ENCODE measurements at regions of chr3 and their contacts with region 1.

Region 1: GRCh38 chr3:28241221-28242160 is at the start of gene CMC1:
- DNase-seq: peak; percentile 96
- H3K4me3 Mint-ChIP-seq: peak within 1 kb of the TSS; percentile 93
- H3K27ac Mint-ChIP-seq: peak within 1 kb of the TSS; percentile 94
- H3K4me1 Mint-ChIP-seq: peaks cover 38% of the 10 kb centered on the region
- H3K27me3 Mint-ChIP-seq: no peaks in the 10 kb centered on the region
- total RNA-seq, gene CMC1: 27.5 to 28.6 TPM

Region 2: DNA sequence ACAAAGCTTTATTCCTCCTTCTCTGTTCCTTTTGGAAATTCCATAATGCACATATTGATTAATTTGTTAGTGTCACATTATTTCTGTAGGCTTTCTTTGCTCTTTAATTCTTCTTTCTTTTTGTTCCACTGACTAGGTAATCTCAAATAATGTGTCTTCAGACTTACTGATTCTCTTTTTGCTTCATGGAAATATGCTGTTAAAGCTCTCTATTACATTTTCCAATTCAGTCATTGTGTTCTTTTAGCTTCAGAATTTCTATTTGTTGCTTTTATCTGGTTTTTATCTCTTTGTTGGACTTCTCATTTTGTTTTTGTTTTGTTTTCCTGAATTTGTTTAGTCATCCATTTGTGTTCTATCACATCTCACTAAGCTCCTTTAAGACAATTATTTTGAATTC is 372.3 kb before region 1 on chr3:
- CTCF ChIA-PET with region 1: no interaction called
- POLR2A ChIA-PET with region 1: no interaction called
- intact Hi-C with region 1: no loop called
- DNase-seq: no peak
- H3K4me3 Mint-ChIP-seq: no peak overlapping the region
- H3K27ac Mint-ChIP-seq: no peak overlapping the region
- H3K4me1 Mint-ChIP-seq: no peaks in the 10 kb centered on the region
- H3K27me3 Mint-ChIP-seq: no peaks in the 10 kb centered on the region

Region 3: GRCh38 chr3:27960133-27960532 is 281.4 kb before region 1 on chr3:
- CTCF ChIA-PET with region 1: no interaction called
- POLR2A ChIA-PET with region 1: no interaction called
- intact Hi-C with region 1: no loop called
- DNase-seq: no peak
- H3K4me3 Mint-ChIP-seq: no peak overlapping the region
- H3K27ac Mint-ChIP-seq: no peak overlapping the region
- H3K4me1 Mint-ChIP-seq: peaks cover 31% of the 10 kb centered on the region
- H3K27me3 Mint-ChIP-seq: no peaks in the 10 kb centered on the region

Region 4: GRCh38 chr3:28171962-28172361 is 69.5 kb before region 1 on chr3:
- CTCF ChIA-PET with region 1: no interaction called
- POLR2A ChIA-PET with region 1: no interaction called
- intact Hi-C with region 1: loop called (anchors 1 kb)
- DNase-seq: no peak
- H3K4me3 Mint-ChIP-seq: peak overlapping the region; percentile 12
- H3K27ac Mint-ChIP-seq: peak overlapping the region; percentile 72
- H3K4me1 Mint-ChIP-seq: peaks cover 10% of the 10 kb centered on the region
- H3K27me3 Mint-ChIP-seq: peaks cover 2% of the 10 kb centered on the region

Region 5: DNA sequence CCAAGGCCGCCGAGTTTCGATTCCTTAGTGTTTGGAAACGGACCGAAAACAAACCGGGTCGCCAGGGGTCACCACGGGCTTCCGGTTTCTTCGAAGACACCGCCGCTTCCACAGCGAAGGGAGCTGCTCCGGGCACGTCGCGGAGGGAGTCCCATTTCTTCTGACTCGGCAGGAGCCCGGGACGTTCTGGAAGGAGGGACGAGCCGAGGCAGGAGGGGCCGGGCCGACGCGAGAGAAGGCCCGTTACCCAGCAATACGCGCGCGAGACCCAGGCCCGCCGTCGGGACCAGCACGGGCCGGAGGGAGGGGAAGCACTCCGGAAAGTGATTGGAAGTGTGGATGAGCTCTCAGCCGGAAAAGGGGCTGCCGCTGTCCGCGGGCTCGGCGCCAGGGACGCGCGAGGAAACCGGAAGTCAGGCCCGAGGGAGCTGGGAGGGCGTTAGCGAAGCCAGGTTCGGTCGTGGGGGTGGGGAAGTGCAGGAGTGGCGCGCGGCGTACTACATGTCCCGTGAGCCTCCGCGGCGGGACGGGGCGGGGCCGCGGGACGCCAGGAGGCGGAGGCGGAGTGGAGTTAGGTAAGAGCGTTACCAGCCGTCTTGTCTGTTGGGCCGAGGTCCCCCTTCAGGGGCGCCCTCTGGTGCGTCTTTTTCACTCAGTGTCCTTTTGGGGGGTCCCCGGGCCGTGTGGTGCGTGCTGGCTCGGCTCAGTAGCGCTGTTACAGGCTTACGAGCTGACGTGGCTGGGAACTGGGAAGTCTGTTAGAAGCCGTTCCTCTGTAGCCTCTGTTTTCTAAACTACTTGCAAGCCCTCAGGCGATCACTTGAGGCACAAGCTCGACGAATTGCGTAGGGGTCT is 107.4 kb after region 1 on chr3 and contains the starts of genes AZI2 and ZCWPW2:
- CTCF ChIA-PET with region 1: no interaction called
- POLR2A ChIA-PET with region 1: interaction called, 5 read pairs
- intact Hi-C with region 1: loop called (anchors 1 kb)
- DNase-seq: peak; percentile 94
- H3K4me3 Mint-ChIP-seq: peak within 1 kb of the TSS; percentile 95
- H3K27ac Mint-ChIP-seq: peak within 1 kb of the TSS; percentile 88
- H3K4me1 Mint-ChIP-seq: peaks cover 40% of the 10 kb centered on the region
- H3K27me3 Mint-ChIP-seq: no peaks in the 10 kb centered on the region
- total RNA-seq, gene AZI2: 35.5 to 38.9 TPM
- total RNA-seq, gene ZCWPW2: 0.39 to 0.43 TPM

Measured in activated CD4-positive, alpha-beta memory T cell treated with anti-CD3 and anti-CD28 coated beads for 36 hours (primary cell).